SK-N-SH (cell line): ENCODE measurements at regions of chr3 and their contacts with region 1.

Region 1: GRCh38 chr3:185176750-185177359 is 24.0 kb upstream of the C3orf70 start:
- DNase-seq: peak; percentile 37
- H3K4me3 ChIP-seq: no peak overlapping the region
- H3K27ac ChIP-seq: no peak overlapping the region
- H3K4me1 ChIP-seq: no peaks in the 10 kb centered on the region; a peak in 1 of 4 replicates
- H3K27me3 ChIP-seq: no peaks in the 10 kb centered on the region; the same call in 1 of the 2 replicates
- CTCF ChIP-seq: peak; percentile 82
- EP300 ChIP-seq: no peak
- RAD21 ChIP-seq: peak; percentile 75

Region 2: DNA sequence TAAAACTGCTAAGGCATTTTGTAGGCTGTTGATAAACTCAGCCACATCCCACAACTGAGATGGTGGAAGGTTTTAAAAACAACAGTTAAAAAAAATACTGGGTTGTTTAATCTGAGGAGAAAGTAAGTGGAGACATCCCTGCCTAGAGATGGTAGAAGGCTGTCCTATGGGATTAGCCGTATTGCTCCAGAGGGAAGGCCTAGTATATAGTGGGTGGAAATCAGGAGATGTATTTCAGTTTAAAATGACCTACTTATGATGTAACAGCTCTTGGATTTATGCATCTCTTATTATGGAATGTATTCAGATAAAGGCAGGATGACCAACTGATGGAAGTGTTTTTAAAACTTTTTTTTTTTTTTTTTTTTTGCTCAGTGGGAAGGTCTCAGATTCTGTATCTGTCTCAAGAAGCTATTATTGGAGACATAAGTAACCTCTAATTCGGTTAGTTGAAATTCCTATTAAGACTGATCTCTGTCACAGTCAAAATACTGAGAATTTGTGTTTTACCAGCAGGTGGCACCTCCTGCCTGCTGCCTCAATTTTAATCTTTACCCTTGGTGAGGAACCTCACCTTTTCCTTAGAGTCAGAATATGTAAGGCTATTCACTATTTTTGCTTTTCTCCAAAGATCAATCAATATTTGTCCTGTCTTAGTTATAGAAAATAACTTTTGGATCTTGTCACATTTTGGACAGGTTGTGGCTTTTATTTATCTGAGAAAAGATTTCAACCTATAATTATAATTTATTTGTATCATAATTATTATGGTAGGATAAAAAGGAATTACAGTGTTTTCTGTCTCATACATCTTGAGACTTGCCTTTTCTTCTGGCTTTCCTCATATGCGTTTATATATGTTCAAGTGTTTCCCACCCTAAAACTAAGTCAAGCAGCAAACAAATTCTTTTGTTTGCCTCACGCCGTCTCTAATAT is 301.9 kb before region 1 on chr3:
- CTCF ChIA-PET with region 1: interaction called, 20 read pairs
- POLR2A ChIA-PET with region 1: no interaction called
- DNase-seq: peak; percentile 47
- H3K4me3 ChIP-seq: no peak overlapping the region; a peak in 1 of 4 replicates
- H3K27ac ChIP-seq: no peak overlapping the region
- H3K4me1 ChIP-seq: no peaks in the 10 kb centered on the region
- H3K27me3 ChIP-seq: no peaks in the 10 kb centered on the region
- CTCF ChIP-seq: peak; percentile 73
- EP300 ChIP-seq: no peak
- RAD21 ChIP-seq: peak; percentile 91

Region 3: GRCh38 chr3:185152410-185153210 is 24.2 kb before region 1 on chr3 and contains the start of gene C3orf70:
- CTCF ChIA-PET with region 1: interaction called, 12 read pairs
- POLR2A ChIA-PET with region 1: no interaction called
- DNase-seq: peak; percentile 88
- H3K4me3 ChIP-seq: peak within 1 kb of the TSS; percentile 49
- H3K27ac ChIP-seq: no peak within 1 kb of the TSS
- H3K4me1 ChIP-seq: peaks cover 0 to 6% of the 10 kb centered on the region in 2 experiments; a peak in 1 of 4 replicates
- H3K27me3 ChIP-seq: peaks cover 36% of the 10 kb centered on the region
- CTCF ChIP-seq: no peak
- EP300 ChIP-seq: no peak
- RAD21 ChIP-seq: no peak
- polyA plus RNA-seq, gene C3orf70: under 0.01 TPM in 1 of 2 replicates, not detected in the other

Region 4: DNA sequence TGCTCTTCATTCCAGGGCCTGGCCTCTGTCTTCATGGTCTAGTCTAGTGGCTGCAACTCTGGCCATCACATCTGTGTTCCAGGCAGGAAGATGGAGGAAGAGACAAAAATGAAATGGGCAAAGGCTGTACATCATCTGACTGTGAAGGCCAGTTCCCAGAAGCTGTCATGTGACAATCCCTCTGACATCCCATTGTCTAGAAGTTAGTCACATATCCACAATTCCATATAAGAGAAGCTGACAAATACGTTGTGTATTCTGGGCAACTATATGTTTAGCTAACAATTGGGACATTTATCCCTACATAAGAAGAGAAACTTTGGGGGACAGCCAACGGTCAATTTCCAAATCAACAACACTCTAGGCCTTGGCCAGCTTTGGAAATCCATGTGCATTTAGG is 10.5 kb after region 1 on chr3:
- CTCF ChIA-PET with region 1: interaction called, 10 read pairs
- POLR2A ChIA-PET with region 1: no interaction called
- DNase-seq: no peak
- H3K4me3 ChIP-seq: no peak overlapping the region
- H3K27ac ChIP-seq: no peak overlapping the region
- H3K4me1 ChIP-seq: no peaks in the 10 kb centered on the region
- H3K27me3 ChIP-seq: no peaks in the 10 kb centered on the region
- CTCF ChIP-seq: no peak
- EP300 ChIP-seq: no peak
- RAD21 ChIP-seq: no peak

Region 5: GRCh38 chr3:185200635-185201034 is 23.8 kb after region 1 on chr3:
- CTCF ChIA-PET with region 1: interaction called, 11 read pairs
- POLR2A ChIA-PET with region 1: no interaction called
- DNase-seq: no peak
- H3K4me3 ChIP-seq: no peak overlapping the region
- H3K27ac ChIP-seq: 0 out of 4 replicates have a peak overlapping the region, but pooled peaks of 1 of the 2 experiments have one; percentile 22
- H3K4me1 ChIP-seq: no peaks in the 10 kb centered on the region
- H3K27me3 ChIP-seq: no peaks in the 10 kb centered on the region
- CTCF ChIP-seq: no peak
- EP300 ChIP-seq: no peak
- RAD21 ChIP-seq: no peak

Region 6: DNA sequence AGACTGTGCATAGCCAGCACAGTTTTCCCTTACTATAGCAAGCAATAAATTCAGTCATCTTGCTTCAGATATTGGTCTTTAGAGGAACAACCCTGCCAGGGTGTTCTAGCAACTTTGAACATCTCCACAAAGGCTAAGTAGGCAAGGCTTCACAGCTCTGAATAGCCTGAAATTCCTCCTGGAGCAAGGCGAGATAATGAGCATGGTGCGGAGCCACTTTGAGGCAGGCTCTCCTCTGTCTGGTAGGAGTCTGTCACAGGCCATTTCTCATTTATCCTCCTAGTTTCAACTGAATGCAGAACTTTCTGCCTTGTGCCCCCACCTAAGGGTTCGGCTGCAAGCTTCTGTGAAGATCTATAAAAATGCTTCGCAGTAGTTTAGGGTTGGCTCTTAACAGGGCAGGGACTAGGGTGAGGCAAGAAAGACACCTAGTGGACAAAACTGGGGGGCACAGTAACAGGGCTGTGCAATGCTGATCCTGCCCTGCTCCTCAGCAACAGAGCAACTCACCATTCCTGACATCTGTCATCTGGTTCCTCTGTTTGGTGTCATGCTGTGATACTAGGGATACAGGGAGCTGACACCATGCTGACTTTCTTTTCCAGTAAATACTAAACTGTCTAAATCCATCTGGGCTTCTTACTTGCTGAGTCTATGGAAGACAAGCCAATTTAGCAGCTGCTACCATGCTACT is 93.6 kb after region 1 on chr3:
- CTCF ChIA-PET with region 1: interaction called, 14 read pairs
- POLR2A ChIA-PET with region 1: no interaction called
- DNase-seq: peak; percentile 82
- H3K4me3 ChIP-seq: no peak overlapping the region
- H3K27ac ChIP-seq: peak overlapping the region in 1 of 2 experiments; percentile 48; a peak in 2 of 4 replicates
- H3K4me1 ChIP-seq: peaks cover 0 to 15% of the 10 kb centered on the region in 2 experiments; a peak in 1 of 4 replicates
- H3K27me3 ChIP-seq: no peaks in the 10 kb centered on the region; the same call in 1 of the 2 replicates
- CTCF ChIP-seq: peak; percentile 53
- EP300 ChIP-seq: no peak
- RAD21 ChIP-seq: peak; percentile 76

Region 7: DNA sequence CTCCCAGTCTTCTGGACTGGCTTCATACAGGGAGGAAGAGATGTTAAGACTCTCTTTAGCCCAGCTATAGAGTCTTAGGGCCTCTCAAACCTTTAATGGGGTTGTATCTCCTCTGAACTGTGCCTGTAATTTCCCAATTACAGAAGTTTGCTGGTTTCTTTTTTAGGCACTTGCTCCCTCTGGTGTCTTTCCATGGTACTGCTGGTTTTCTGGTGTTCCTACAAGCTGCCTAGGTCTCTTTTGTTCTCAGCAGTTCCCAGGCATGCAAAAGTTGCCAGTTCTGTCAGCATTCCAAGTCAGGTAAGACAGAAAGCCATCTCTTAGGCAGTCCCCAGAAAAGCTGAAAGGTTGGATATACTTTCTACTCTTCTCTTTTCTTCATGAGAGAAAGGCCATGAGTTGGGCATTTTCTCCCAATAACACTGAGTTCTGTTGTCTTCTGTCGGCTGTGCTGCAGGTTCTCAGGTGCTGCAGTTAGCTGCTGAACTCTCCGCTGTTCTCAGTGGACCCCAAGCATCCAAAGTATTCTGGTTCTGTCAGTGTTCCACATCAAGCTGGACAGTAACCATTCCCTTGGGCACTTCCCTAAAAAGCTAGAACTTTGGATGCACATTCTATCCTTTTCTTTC is 131.4 kb after region 1 on chr3:
- CTCF ChIA-PET with region 1: interaction called, 11 read pairs
- POLR2A ChIA-PET with region 1: no interaction called
- DNase-seq: peak; percentile 44
- H3K4me3 ChIP-seq: no peak overlapping the region; a peak in 1 of 4 replicates
- H3K27ac ChIP-seq: no peak overlapping the region
- H3K4me1 ChIP-seq: no peaks in the 10 kb centered on the region
- H3K27me3 ChIP-seq: no peaks in the 10 kb centered on the region
- CTCF ChIP-seq: peak; percentile 62
- EP300 ChIP-seq: no peak
- RAD21 ChIP-seq: peak; percentile 68

Region 8: GRCh38 chr3:185353823-185354614 is 177.2 kb after region 1 on chr3:
- CTCF ChIA-PET with region 1: no interaction called
- POLR2A ChIA-PET with region 1: no interaction called
- DNase-seq: peak; percentile 73
- H3K4me3 ChIP-seq: peak overlapping the region in 1 of 2 experiments; percentile 13; a peak in 1 of 4 replicates
- H3K27ac ChIP-seq: no peak overlapping the region
- H3K4me1 ChIP-seq: no peaks in the 10 kb centered on the region; a peak in 1 of 4 replicates
- H3K27me3 ChIP-seq: no peaks in the 10 kb centered on the region
- CTCF ChIP-seq: peak; percentile 63
- EP300 ChIP-seq: no peak
- RAD21 ChIP-seq: peak; percentile 72